ENCODE measurements at regions of chr5 and their contacts with region 1.

Region 1: GRCh38 chr5:151051066-151051930 is 29.5 kb downstream of the TNIP1 start:
- DNase-seq: peak; percentile 85 to 86
- H3K4me3 ChIP-seq: no peak overlapping the region
- H3K27ac ChIP-seq: peak overlapping the region in 1 of 3 donors; percentile 62
- H3K4me1 ChIP-seq: peaks cover 7 to 35% of the 10 kb centered on the region in 2 donors
- H3K27me3 ChIP-seq: no peaks in the 10 kb centered on the region
- CTCF ChIP-seq: peak; percentile 57 to 92 (median 83)
- POLR2A ChIP-seq: peak in 1 of 2 donors; percentile 31

Region 2: DNA sequence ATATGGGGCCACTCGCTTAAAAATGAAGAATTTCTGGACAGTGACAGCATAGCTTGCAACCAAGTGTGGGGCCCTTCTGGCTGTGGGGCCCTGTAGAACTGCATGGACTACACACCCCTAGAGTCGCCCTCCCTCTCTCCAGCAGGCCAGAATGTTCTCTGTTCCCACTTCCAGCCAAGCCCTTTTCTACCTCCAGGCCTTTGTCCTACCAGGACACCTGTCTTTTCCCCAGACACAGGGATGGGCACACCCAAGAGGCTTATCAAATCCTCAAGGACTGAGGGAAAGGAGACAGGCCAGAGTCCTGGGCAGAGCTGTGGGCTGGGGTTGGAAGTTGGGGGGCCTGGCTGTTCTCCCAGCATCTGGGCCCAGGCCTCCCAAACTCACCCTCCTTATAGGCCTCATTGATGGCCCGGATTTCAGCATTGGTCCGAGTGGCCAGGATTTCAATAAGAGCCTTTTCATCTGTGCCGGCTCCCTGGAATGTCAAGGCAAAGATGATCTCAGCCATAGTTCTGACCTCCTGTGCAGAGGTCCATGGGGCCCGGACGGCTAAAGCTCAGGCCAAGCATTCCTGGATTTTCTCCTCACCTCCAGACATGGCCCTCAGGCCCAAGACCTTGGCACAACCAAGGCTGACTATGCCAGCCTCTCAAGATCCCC is 67.7 kb after region 1 on chr5:
- intact Hi-C with region 1: loop called (anchors 2 kb)
- DNase-seq: no peak
- H3K4me3 ChIP-seq: no peak overlapping the region
- H3K27ac ChIP-seq: peak overlapping the region; percentile 73 to 85 (median 81)
- H3K4me1 ChIP-seq: peaks cover 5 to 25% of the 10 kb centered on the region in 2 donors
- H3K27me3 ChIP-seq: no peaks in the 10 kb centered on the region
- CTCF ChIP-seq: no peak
- POLR2A ChIP-seq: no peak

Region 3: GRCh38 chr5:151157426-151158286 is 106.4 kb after region 1 on chr5 and contains the start of gene ANXA6:
- intact Hi-C with region 1: no loop called
- DNase-seq: peak; percentile 90
- H3K4me3 ChIP-seq: peak within 1 kb of the TSS; percentile 32 to 83 (median 59)
- H3K27ac ChIP-seq: peak within 1 kb of the TSS; percentile 77 to 93 (median 84)
- H3K4me1 ChIP-seq: peaks cover 12 to 32% of the 10 kb centered on the region in 2 donors
- H3K27me3 ChIP-seq: no peaks in the 10 kb centered on the region
- CTCF ChIP-seq: no peak
- POLR2A ChIP-seq: peak in 1 of 2 donors; percentile 87
- total RNA-seq, gene ANXA6: 122 to 283 (median 180) TPM